ENCODE measurements at regions of chr10 and their contacts with region 1.

Region 1: GRCh38 chr10:24080207-24080606 is 128.7 kb upstream of the KIAA1217 start:
- DNase-seq: no peak
- H3K4me3 ChIP-seq: no peak overlapping the region
- H3K27ac ChIP-seq: no peak overlapping the region
- H3K4me1 ChIP-seq: no peaks in the 10 kb centered on the region
- H3K27me3 ChIP-seq: no peaks in the 10 kb centered on the region
- CTCF ChIP-seq: no peak
- POLR2A ChIP-seq: no peak

Region 2: GRCh38 chr10:24706479-24707118 is 626.4 kb after region 1 on chr10:
- intact Hi-C with region 1: loop called (anchors 10 kb)
- DNase-seq: no peak
- H3K4me3 ChIP-seq: no peak overlapping the region
- H3K27ac ChIP-seq: peak overlapping the region in 1 of 2 donors; percentile 45
- H3K4me1 ChIP-seq: peaks cover 0 to 7% of the 10 kb centered on the region in 2 donors
- H3K27me3 ChIP-seq: no peaks in the 10 kb centered on the region
- CTCF ChIP-seq: no peak
- POLR2A ChIP-seq: no peak

Measured in breast epithelium (tissue), 4 donors.